Esophagus muscularis mucosa (tissue), 4 donors: ENCODE measurements at regions of chr4 and their contacts with region 1.

Region 1: DNA sequence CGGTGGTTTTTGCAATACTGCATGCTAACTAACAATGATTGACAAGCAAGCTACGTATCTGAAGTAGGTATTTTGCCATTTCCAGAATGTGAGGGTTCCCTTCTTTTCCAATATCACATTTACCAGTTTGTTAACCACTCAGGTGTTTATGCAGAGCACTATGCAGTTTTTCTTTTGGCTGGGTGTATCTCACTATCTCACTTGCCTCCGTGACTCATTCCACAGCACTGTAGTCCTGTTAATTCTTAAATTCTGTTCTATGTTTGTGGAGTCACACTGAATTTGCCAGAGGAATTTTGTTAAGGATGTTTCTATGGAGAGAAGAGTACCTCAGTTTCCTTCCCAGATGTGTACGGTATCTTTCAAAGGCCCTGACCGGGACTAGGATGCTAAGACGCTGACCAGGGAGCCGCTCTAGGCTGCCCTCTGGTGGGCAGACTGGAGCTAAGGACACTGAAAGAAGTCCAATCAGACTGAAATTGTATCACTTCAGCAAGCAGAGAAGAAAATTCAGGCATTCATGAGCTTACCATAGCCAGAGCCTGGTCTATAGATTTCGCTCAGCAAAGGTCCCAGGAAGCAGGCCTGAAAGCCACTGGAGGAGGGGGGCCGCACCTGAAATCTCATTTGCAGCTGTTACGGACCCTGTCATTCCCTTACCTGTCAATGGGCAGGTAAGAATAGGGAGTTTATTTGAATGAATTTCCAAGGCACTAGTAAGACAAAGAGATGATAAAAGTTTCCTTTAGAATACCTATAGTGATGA is 388.4 kb upstream of the SPOCK3 start:
- DNase-seq: no peak
- H3K4me3 ChIP-seq: no peak overlapping the region
- H3K27ac ChIP-seq: no peak overlapping the region
- H3K4me1 ChIP-seq: peaks cover 0 to 2% (median 0%) of the 10 kb centered on the region in 4 donors
- H3K27me3 ChIP-seq: no peaks in the 10 kb centered on the region
- CTCF ChIP-seq: peak; percentile 41 to 71 (median 58)
- EP300 ChIP-seq: no peak
- POLR2A ChIP-seq: no peak

Region 2: GRCh38 chr4:166165829-166166420 is 1456.7 kb before region 1 on chr4:
- intact Hi-C with region 1: loop called (anchors 5 kb)
- DNase-seq: no peak
- H3K4me3 ChIP-seq: no peak overlapping the region
- H3K27ac ChIP-seq: no peak overlapping the region
- H3K4me1 ChIP-seq: no peaks in the 10 kb centered on the region
- H3K27me3 ChIP-seq: no peaks in the 10 kb centered on the region
- CTCF ChIP-seq: peak; percentile 71 to 81 (median 73)
- EP300 ChIP-seq: no peak
- POLR2A ChIP-seq: no peak

Region 3: DNA sequence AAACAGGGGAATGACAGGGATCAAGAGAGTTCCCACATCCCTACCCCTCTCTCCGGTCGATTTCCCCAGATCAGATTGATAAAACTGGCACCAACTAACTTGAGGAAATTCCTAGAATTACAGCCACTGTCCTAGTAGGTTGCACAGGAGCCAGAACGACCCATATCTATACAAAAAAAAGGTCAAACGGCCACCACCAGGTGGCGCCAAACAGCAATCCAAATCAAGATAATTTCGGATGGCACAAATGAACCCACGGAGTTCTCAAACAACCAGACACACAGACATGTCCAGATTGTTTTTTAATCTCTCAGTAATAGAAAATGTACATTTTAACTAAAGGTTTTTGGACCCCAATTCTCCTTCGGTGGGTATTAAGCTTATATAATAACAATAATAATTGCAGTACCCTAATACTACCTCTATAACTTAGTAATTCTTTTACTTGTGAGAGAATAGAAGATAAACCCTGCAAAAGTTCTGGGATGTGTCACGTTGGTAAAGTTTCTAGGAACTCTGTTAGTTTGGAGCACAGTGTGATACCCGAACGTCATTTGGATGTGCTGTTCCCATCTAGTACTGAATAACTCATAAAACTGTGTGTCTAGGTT is 601.0 kb before region 1 on chr4:
- intact Hi-C with region 1: loop called (anchors 10 kb)
- DNase-seq: no peak
- H3K4me3 ChIP-seq: no peak overlapping the region
- H3K27ac ChIP-seq: no peak overlapping the region
- H3K4me1 ChIP-seq: no peaks in the 10 kb centered on the region
- H3K27me3 ChIP-seq: no peaks in the 10 kb centered on the region
- CTCF ChIP-seq: peak; percentile 45 to 78 (median 73)
- EP300 ChIP-seq: no peak
- POLR2A ChIP-seq: no peak

Region 4: GRCh38 chr4:167509551-167509950 is 113.1 kb before region 1 on chr4:
- intact Hi-C with region 1: no loop called
- DNase-seq: no peak
- H3K4me3 ChIP-seq: no peak overlapping the region
- H3K27ac ChIP-seq: no peak overlapping the region
- H3K4me1 ChIP-seq: no peaks in the 10 kb centered on the region
- H3K27me3 ChIP-seq: no peaks in the 10 kb centered on the region
- CTCF ChIP-seq: no peak
- EP300 ChIP-seq: no peak
- POLR2A ChIP-seq: no peak

Region 5: GRCh38 chr4:167652267-167652666 is 29.6 kb after region 1 on chr4:
- intact Hi-C with region 1: loop called (anchors 5 kb)
- DNase-seq: no peak
- H3K4me3 ChIP-seq: no peak overlapping the region
- H3K27ac ChIP-seq: no peak overlapping the region
- H3K4me1 ChIP-seq: no peaks in the 10 kb centered on the region
- H3K27me3 ChIP-seq: no peaks in the 10 kb centered on the region
- CTCF ChIP-seq: no peak
- EP300 ChIP-seq: no peak
- POLR2A ChIP-seq: no peak

Region 6: DNA sequence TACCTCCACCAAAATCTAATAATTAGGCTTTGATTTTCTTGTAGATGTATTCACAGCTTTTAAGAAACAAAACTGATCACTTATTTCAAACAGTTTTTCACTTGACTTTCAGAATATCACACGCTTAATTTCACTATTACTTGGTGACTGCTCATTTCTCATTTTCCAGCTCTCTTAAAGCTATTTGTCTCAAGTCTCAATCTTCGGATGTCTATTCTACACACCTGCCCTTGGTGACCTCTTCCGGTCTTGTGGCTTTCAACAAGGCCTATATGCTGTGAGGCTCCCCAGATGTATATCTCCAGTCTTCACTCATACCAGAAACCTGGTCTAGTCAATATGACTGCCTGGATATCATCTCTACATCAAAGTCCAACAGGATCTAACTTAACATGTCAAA is 434.7 kb after region 1 on chr4:
- intact Hi-C with region 1: no loop called
- DNase-seq: no peak
- H3K4me3 ChIP-seq: no peak overlapping the region
- H3K27ac ChIP-seq: no peak overlapping the region
- H3K4me1 ChIP-seq: no peaks in the 10 kb centered on the region
- H3K27me3 ChIP-seq: no peaks in the 10 kb centered on the region
- CTCF ChIP-seq: no peak
- EP300 ChIP-seq: no peak
- POLR2A ChIP-seq: no peak